ENCODE measurements at regions of chrX and their contacts with region 1.

Region 1: DNA sequence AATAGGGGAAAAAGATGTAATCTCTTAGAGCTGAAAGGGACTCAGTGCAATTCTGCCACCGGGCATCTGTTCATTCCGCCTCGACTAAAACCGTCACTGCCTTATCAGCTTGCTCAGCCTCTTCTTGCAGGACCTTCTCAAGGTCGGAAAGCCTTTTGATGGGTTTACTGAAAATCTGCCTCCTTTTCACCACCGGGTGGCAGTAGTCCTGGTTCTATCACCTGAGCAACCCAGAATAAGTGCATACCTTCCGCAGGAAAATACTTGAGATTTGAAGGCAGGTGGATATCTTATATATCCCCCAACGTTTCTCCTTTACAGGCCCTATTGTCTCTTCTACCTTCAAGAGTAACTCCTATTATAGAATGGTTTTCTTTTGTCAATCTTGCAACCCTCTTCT is 103.4 kb upstream of the PAK3 start:
- DNase-seq: peak; percentile 10
- CTCF ChIP-seq: peak; percentile 44

Region 2: DNA sequence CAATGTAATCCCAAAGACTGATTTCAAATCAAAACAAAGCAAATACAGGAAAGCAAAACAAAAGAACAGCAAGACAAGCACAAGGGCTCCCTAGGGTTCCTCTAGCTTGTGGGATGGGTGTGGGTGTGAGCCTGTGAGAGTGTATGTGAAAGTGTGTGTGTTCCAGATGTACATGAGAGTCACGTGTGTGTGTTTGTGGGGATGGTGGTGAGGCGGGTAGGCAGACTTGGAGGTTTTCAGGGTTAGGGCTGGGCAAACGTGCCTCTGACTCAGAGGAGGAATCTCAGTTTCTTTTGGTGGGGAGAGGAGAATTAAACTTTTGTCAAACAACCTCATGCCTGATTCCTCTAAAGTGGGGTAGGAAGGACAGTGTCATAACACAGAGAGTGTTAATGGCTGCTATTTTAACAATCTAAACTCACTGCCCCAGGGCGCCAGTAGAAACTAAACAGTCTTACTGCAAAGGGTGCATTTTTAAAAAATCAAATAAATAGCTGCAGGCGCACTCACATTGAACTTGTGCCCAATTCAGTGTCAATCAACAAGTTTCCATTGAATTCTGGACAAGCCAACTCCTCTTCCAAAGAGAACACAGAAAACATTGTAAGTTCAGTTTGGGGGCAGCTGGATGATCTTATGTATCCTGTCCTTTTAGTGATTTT is 248.8 kb before region 1 on chrX:
- in situ Hi-C with region 1: no loop called
- DNase-seq: no peak
- CTCF ChIP-seq: no peak

Region 3: GRCh38 chrX:111244235-111244750 is 251.7 kb after region 1 on chrX:
- in situ Hi-C with region 1: loop called (anchors 25 kb)
- DNase-seq: peak; percentile 34
- CTCF ChIP-seq: peak; percentile 29

Measured in GM13976 (cell line).